Activated CD4-positive, alpha-beta T cell treated with anti-CD3 and anti-CD28 coated beads, Interleukin-2, amount 10 ng/mL, durations not matched to agents 24 days and 14 days (primary cell): ENCODE measurements at regions of chr1 and their contacts with region 1.

Region 1: DNA sequence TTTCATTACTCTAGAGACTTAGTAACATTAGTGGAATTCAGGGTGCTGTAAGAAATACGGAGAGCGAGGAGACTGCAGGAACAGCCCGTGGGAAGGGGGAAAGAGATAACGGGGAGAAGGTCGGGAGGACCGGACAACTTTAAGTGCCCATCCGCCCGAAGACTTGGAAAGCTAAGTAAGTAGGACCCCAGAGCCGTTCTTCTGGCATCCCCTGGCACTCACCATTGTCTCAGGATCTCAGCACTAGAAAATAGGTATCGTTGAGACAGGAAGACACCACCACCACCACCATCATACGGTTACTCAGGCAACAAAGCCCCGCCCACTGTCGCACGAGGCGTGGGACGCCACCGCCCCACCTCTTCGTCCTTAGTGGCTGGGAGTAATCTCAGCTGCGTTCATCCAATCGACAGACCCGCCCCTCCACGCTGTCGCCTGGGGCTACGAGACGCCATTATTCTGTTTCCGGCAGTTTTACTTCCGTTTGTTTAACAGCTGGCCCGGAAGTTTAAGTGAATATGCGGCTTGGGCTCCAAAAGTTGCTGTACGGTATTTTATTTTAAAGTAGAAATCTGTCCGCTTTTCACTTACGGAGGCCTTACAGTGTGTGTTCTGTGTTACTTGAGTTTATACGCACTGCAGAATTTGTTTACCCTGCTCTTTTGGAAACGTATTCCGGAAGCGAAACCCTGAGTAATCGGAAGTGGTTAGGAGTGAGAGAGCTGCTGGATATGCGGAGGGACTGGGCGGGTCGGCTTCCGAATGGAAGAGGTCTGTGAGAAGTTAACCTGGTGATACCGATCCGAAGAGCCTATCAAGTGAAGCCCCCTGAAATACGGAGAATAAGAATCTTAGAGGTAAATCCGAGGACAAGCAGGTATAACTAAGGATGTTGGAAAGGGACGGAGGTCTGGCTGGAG is at the starts of genes BLZF1 and NME7:
- DNase-seq: peak; percentile 100
- H3K4me3 Mint-ChIP-seq: peak within 1 kb of the TSS; percentile 73
- H3K27ac Mint-ChIP-seq: peak within 1 kb of the TSS; percentile 26
- H3K4me1 Mint-ChIP-seq: peaks cover 35% of the 10 kb centered on the region
- H3K27me3 Mint-ChIP-seq: no peaks in the 10 kb centered on the region
- total RNA-seq, gene BLZF1: 11.2 and 11.3 TPM in 2 replicates
- total RNA-seq, gene NME7: 10.6 and 13.8 TPM in 2 replicates

Region 2: GRCh38 chr1:168225476-168226190 is 1142.1 kb before region 1 on chr1 and contains the start of gene SFT2D2:
- intact Hi-C with region 1: loop called (anchors 5 kb)
- DNase-seq: peak; percentile 95
- H3K4me3 Mint-ChIP-seq: peak within 1 kb of the TSS; percentile 84
- H3K27ac Mint-ChIP-seq: peak within 1 kb of the TSS; percentile 95
- H3K4me1 Mint-ChIP-seq: peaks cover 50% of the 10 kb centered on the region
- H3K27me3 Mint-ChIP-seq: no peaks in the 10 kb centered on the region
- total RNA-seq, gene SFT2D2: 64.3 and 65.7 TPM in 2 replicates

Region 3: GRCh38 chr1:169106095-169106920 is 261.4 kb before region 1 on chr1 and contains the start of gene ATP1B1:
- intact Hi-C with region 1: loop called (anchors 2 kb)
- DNase-seq: peak; percentile 96
- H3K4me3 Mint-ChIP-seq: peak within 1 kb of the TSS; percentile 85
- H3K27ac Mint-ChIP-seq: peak within 1 kb of the TSS; percentile 85
- H3K4me1 Mint-ChIP-seq: peaks cover 47% of the 10 kb centered on the region
- H3K27me3 Mint-ChIP-seq: peaks cover 19% of the 10 kb centered on the region
- total RNA-seq, gene ATP1B1: 12.5 and 15.3 TPM in 2 replicates

Region 4: DNA sequence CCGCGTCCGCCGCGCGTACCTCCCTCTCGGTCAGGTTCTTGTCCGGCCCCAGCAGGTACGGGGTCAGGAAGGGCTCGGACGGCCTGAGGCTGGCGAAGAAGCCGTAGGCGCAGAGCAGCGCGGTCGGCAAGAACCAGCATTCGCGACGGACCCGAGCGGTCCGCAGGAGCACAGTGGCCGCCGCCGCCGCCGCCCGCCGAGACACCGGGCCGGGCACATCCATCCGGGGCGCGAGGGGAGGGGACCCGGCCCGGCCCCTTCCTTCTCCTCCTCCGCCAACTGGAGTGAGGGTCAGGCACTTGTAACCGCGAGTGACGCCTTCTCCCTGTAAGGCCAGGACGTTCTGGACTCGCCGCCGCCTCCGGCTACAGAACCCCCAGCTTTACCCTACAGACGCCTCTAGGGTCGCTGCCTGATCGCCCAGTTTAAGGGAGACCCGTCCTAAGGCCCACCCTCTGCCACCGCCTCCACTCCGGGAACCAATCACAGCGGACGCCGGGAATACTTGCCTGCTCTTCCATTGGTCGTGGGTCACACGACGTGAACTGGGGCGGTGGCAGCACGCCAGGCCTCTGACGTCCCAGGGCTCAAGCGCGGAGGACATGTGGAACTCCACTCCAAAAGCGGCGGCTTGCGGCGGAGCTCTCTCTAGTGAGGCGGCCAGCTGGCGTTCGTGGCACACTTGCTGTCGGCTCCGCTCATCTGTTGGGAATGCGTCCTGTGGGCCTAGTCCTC is 118.0 kb after region 1 on chr1 and contains the start of gene SLC19A2:
- intact Hi-C with region 1: loop called (anchors 1 kb)
- DNase-seq: peak; percentile 98
- H3K4me3 Mint-ChIP-seq: peak within 1 kb of the TSS; percentile 98
- H3K27ac Mint-ChIP-seq: peak within 1 kb of the TSS; percentile 94
- H3K4me1 Mint-ChIP-seq: peaks cover 46% of the 10 kb centered on the region
- H3K27me3 Mint-ChIP-seq: no peaks in the 10 kb centered on the region
- total RNA-seq, gene SLC19A2: 12.1 and 12.2 TPM in 2 replicates

Region 5: DNA sequence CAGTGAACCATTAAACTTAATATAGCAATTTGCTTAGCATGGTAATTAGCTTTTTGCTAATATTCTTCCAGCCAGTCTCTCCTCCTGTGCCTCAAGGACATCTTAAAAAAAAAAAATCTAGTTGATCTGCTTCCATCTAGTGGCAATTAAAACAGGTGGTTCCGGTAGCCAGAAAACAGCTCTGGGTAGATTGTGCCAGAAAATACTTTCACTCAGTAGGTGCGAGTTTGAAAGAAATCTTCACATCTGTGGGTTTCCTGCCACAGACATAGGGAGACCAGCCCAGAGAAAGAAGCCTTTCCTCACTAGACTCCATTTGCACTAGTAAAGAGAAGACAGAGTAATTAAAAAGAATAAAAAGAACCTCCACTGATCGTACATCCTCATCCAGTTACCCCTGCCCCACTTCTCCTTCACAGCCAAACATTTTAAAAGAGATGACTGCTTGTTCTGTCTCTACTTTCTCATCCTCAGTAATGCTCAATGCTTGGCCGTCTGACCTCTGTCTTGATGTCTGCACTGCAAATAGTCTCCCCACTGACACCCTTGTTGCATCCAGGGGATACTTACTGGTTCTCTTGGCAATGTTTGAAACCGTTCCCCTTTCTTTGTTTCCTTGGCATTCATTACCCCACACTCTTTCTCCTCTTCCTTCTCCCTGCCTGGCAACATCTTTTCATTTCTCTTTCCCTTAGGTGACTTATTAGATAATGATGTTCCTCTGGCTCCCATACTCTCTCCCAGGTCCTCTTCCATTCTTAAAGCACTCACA is 326.7 kb after region 1 on chr1:
- intact Hi-C with region 1: loop called (anchors 5 kb)
- DNase-seq: peak; percentile 88
- H3K4me3 Mint-ChIP-seq: peak overlapping the region; percentile 26
- H3K27ac Mint-ChIP-seq: peak overlapping the region; percentile 79
- H3K4me1 Mint-ChIP-seq: peaks cover 84% of the 10 kb centered on the region
- H3K27me3 Mint-ChIP-seq: no peaks in the 10 kb centered on the region